GM10248 (cell line): ENCODE measurements at regions of chr3 and their contacts with region 1.

Region 1: DNA sequence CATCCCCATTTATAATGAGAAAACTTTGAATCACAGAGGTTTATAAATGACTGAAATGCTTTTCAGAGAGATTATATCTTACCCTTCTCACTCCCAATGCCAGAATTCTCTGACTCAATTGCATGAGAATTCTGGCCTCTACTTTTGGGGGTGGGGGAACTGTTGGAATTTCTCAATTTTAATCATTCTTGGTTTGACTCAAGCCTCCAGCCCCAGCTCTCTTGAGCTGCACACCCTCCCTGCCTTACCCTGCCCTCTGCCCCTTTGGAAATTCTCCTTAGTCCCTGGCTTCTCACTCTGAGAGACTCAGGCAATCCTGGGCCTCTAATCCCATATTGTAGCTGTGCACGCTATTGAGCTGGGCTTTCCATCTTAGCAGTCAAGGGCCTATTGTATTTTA is 44.2 kb downstream of the ZNF589 start:
- DNase-seq: no peak
- CTCF ChIP-seq: no peak

Region 2: GRCh38 chr3:48232734-48233133 is 52.4 kb before region 1 on chr3:
- CTCF ChIA-PET with region 1: no interaction called
- POLR2A ChIA-PET with region 1: no interaction called
- DNase-seq: peak; percentile 53
- CTCF ChIP-seq: peak; percentile 78

Region 3: GRCh38 chr3:48273594-48274211 is 11.4 kb before region 1 on chr3:
- CTCF ChIA-PET with region 1: interaction called, 11 read pairs
- POLR2A ChIA-PET with region 1: no interaction called
- DNase-seq: peak; percentile 77
- CTCF ChIP-seq: peak; percentile 81